ENCODE measurements at regions of chr16 and their contacts with region 1.

Region 1: GRCh38 chr16:1097800-1098199 is 1.8 kb upstream of the C1QTNF8 start:
- DNase-seq: no peak
- ATAC-seq: no peak
- H3K4me3 ChIP-seq: no peak overlapping the region
- H3K27ac ChIP-seq: no peak overlapping the region; a peak in 1 of 6 replicates
- H3K4me1 ChIP-seq: peaks cover 19% of the 10 kb centered on the region; the same call in 2 of the 3 replicates
- CTCF ChIP-seq: no peak
- EP300 ChIP-seq: no peak
- POLR2A ChIP-seq: no peak
- RAD21 ChIP-seq: no peak

Region 2: GRCh38 chr16:813204-813915 is 284.4 kb before region 1 on chr16:
- CTCF ChIA-PET with region 1: interaction called, 10 read pairs
- POLR2A ChIA-PET with region 1: no interaction called
- DNase-seq: peak in 1 of 2 experiments; percentile 63
- ATAC-seq: peak; percentile 76 to 88
- H3K4me3 ChIP-seq: peak overlapping the region; percentile 43
- H3K27ac ChIP-seq: peak overlapping the region; percentile 57 to 80; a peak in 5 of 6 replicates
- H3K4me1 ChIP-seq: peaks cover 14% of the 10 kb centered on the region; the same call in 2 of the 3 replicates
- CTCF ChIP-seq: peak; percentile 82
- EP300 ChIP-seq: no peak
- POLR2A ChIP-seq: no peak
- RAD21 ChIP-seq: peak; percentile 88 to 95

Measured in A549 (cell line).